ENCODE measurements at regions of chr15 and their contacts with region 1.

Region 1: GRCh38 chr15:78000091-78000926 is 77.2 kb downstream of the TBC1D2B start:
- DNase-seq: peak; percentile 79 to 82 (median 80)
- H3K4me3 ChIP-seq: no peak overlapping the region
- H3K4me3 Mint-ChIP-seq: no peak overlapping the region
- H3K27ac ChIP-seq: no peak overlapping the region
- H3K27ac Mint-ChIP-seq: peak overlapping the region; percentile 49 to 93 (median 66)
- H3K4me1 ChIP-seq: no peaks in the 10 kb centered on the region
- H3K4me1 Mint-ChIP-seq: peaks cover 7 to 18% (median 10%) of the 10 kb centered on the region in 4 donors
- H3K27me3 ChIP-seq: no peaks in the 10 kb centered on the region
- H3K27me3 Mint-ChIP-seq: no peaks in the 10 kb centered on the region

Region 2: GRCh38 chr15:77821188-77821958 is 178.9 kb before region 1 on chr15:
- CTCF ChIA-PET with region 1: no interaction called
- POLR2A ChIA-PET with region 1: no interaction called
- intact Hi-C with region 1: no loop called
- DNase-seq: peak in 1 of 5 donors; percentile 3
- H3K4me3 ChIP-seq: no peak overlapping the region
- H3K4me3 Mint-ChIP-seq: no peak overlapping the region
- H3K27ac ChIP-seq: no peak overlapping the region
- H3K27ac Mint-ChIP-seq: no peak overlapping the region
- H3K4me1 ChIP-seq: no peaks in the 10 kb centered on the region
- H3K4me1 Mint-ChIP-seq: peaks cover 0 to 12% (median 7%) of the 10 kb centered on the region in 4 donors
- H3K27me3 ChIP-seq: no peaks in the 10 kb centered on the region
- H3K27me3 Mint-ChIP-seq: peaks cover 29 to 49% of the 10 kb centered on the region in 2 donors

Region 3: GRCh38 chr15:77966540-77967290 is 33.6 kb before region 1 on chr15:
- CTCF ChIA-PET with region 1: interaction called, 14 read pairs
- POLR2A ChIA-PET with region 1: no interaction called
- intact Hi-C with region 1: loop called (anchors 1 kb)
- DNase-seq: peak in 4 of 5 donors; percentile 39 to 40 (median 39)
- H3K4me3 ChIP-seq: no peak overlapping the region
- H3K4me3 Mint-ChIP-seq: no peak overlapping the region
- H3K27ac ChIP-seq: no peak overlapping the region
- H3K27ac Mint-ChIP-seq: no peak overlapping the region
- H3K4me1 ChIP-seq: no peaks in the 10 kb centered on the region
- H3K4me1 Mint-ChIP-seq: peaks cover 0 to 4% (median 0%) of the 10 kb centered on the region in 4 donors
- H3K27me3 ChIP-seq: no peaks in the 10 kb centered on the region
- H3K27me3 Mint-ChIP-seq: no peaks in the 10 kb centered on the region

Region 4: GRCh38 chr15:78077058-78077877 is 77.0 kb after region 1 on chr15 and contains the start of gene TBC1D2B:
- CTCF ChIA-PET with region 1: interaction called, 10 read pairs
- POLR2A ChIA-PET with region 1: interaction called, 3 read pairs
- intact Hi-C with region 1: no loop called
- DNase-seq: peak; percentile 65 to 71 (median 68)
- H3K4me3 ChIP-seq: peak within 1 kb of the TSS; percentile 59 to 89
- H3K4me3 Mint-ChIP-seq: peak within 1 kb of the TSS; percentile 93 to 100 (median 99)
- H3K27ac ChIP-seq: peak within 1 kb of the TSS; percentile 83
- H3K27ac Mint-ChIP-seq: peak within 1 kb of the TSS; percentile 89 to 99 (median 97)
- H3K4me1 ChIP-seq: peaks cover 45% of the 10 kb centered on the region
- H3K4me1 Mint-ChIP-seq: peaks cover 31 to 61% (median 46%) of the 10 kb centered on the region in 4 donors
- H3K27me3 ChIP-seq: no peaks in the 10 kb centered on the region
- H3K27me3 Mint-ChIP-seq: no peaks in the 10 kb centered on the region
- total RNA-seq, gene TBC1D2B: 98.1 to 114 TPM